ENCODE measurements at regions of chr6 and their contacts with region 1.

Region 1: DNA sequence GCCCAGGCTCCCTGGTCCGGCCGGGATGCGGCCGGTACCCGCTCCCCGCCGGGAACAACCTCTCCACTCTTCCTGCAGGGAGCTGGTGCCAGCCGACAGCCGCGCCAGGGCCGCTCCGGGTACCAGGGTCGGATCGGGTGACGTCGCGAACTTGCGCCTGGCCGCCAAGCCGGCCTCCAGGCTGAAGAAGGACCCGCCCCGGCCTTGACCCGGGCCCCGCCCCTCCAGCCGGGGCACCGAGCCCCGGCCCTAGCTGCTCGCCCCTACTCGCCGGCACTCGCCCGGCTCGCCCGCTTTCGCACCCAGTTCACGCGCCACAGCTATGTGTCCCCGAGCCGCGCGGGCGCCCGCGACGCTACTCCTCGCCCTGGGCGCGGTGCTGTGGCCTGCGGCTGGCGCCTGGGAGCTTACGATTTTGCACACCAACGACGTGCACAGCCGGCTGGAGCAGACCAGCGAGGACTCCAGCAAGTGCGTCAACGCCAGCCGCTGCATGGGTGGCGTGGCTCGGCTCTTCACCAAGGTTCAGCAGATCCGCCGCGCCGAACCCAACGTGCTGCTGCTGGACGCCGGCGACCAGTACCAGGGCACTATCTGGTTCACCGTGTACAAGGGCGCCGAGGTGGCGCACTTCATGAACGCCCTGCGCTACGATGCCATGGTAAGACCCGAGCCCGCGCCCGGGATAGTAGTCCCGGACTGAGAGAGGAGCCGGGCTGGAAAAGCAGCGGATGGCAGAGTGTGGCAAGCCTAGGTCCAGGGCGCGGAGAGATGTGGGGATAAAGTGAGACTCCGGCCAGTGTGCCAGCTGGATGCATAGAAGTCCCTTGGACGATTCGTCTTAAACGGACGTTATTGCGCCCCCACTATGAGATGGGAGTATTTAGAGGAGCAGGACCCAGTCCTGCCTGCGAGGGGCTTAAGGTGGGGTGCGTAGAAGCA is at the start of gene NT5E:
- DNase-seq: no peak
- H3K4me3 ChIP-seq: peak within 1 kb of the TSS; percentile 87
- H3K27me3 ChIP-seq: no peaks in the 10 kb centered on the region
- CTCF ChIP-seq: no peak
- polyA plus RNA-seq, gene NT5E: 63.0 and 99.2 TPM in 2 replicates

Region 2: DNA sequence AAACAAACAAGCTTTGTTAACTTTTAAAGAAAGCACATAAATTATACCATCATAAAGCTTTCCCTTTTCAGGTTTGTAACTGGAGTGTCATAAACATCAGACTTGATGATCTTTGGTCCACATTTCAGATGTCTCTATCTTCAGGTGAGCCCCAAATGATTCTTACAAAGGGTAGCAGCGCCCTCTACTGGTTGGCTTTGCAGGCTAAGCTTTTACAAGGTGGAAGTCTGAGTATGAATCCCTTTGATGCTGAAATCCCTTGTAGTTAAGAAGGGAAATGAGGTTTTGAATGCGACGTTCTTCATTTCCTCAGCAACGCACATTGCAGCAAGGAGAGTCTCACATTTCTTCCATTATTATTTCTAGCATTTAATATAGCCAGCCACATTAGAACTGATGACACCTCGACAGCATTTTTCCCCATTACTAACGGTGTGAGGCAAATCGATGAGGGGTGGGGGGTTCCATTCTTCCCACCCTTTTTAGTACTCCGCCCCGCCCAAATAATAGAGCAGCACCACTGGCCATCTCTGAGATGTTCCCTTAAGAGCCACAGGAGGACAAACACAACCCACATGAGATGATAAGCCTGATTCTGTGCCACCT is 126.6 kb before region 1 on chr6:
- CTCF ChIA-PET with region 1: no interaction called
- POLR2A ChIA-PET with region 1: no interaction called
- DNase-seq: no peak
- H3K4me3 ChIP-seq: no peak overlapping the region
- H3K27me3 ChIP-seq: peaks cover 2% of the 10 kb centered on the region; the same call in 1 of the 2 replicates
- CTCF ChIP-seq: peak; percentile 88

Region 3: GRCh38 chr6:85354761-85355618 is 95.1 kb before region 1 on chr6:
- CTCF ChIA-PET with region 1: interaction called, 12 read pairs
- POLR2A ChIA-PET with region 1: no interaction called
- DNase-seq: no peak
- H3K4me3 ChIP-seq: no peak overlapping the region
- H3K27me3 ChIP-seq: no peaks in the 10 kb centered on the region
- CTCF ChIP-seq: peak; percentile 89

Region 4: GRCh38 chr6:85360794-85361642 is 89.1 kb before region 1 on chr6:
- CTCF ChIA-PET with region 1: interaction called, 12 read pairs
- POLR2A ChIA-PET with region 1: interaction called, 3 read pairs
- DNase-seq: peak; percentile 93
- H3K4me3 ChIP-seq: no peak overlapping the region
- H3K27me3 ChIP-seq: no peaks in the 10 kb centered on the region
- CTCF ChIP-seq: no peak

Region 5: GRCh38 chr6:85404502-85405174 is 45.5 kb before region 1 on chr6:
- CTCF ChIA-PET with region 1: interaction called, 9 read pairs
- POLR2A ChIA-PET with region 1: interaction called, 11 read pairs
- DNase-seq: peak; percentile 74
- H3K4me3 ChIP-seq: no peak overlapping the region
- H3K27me3 ChIP-seq: no peaks in the 10 kb centered on the region
- CTCF ChIP-seq: no peak

Region 6: GRCh38 chr6:85436411-85436810 is 13.7 kb before region 1 on chr6:
- CTCF ChIA-PET with region 1: no interaction called
- POLR2A ChIA-PET with region 1: no interaction called
- DNase-seq: peak; percentile 76
- H3K4me3 ChIP-seq: no peak overlapping the region
- H3K27me3 ChIP-seq: no peaks in the 10 kb centered on the region
- CTCF ChIP-seq: no peak

Region 7: DNA sequence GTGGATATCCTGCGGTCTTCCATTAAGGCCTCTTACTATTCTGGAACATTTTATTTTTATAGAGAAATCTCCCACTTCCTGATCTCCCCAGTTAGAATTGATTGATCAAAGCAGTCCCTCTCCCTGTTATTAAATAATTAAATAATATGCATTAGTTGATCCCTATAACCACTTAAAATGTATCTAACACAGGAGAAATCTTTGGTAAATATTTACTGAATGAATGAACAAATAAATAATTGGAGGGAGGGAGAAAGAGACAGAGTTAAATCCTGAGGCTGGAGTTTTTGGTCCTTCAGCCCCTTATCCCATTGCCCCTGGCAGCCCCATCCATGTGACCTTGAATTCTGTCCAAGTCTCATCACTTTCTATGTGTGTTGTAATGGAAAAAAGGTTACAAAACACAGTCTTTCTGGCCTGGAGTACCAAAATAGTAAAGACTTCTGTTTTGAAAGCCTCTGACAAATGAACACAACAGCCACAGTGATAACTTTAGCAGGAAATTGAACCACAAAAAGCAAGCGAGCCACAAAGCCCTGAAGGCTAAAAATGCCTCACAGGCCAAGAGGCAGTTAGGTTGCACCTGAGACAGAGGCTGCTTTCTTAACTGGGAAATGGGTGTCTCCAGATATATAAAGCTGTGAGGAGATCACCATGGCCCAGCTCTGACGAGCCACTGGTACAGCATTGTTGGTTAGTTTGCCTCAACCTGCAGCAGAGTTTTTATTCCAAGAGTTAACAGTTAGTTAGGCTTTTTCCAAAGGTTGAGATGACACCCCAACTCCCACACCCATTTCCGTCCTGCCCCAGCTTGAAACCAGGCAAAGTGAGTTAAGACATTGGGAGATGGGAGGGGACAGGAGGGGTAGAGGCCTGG is 11.1 kb after region 1 on chr6:
- CTCF ChIA-PET with region 1: interaction called, 22 read pairs
- POLR2A ChIA-PET with region 1: interaction called, 4 read pairs
- DNase-seq: no peak
- H3K4me3 ChIP-seq: no peak overlapping the region
- H3K27me3 ChIP-seq: no peaks in the 10 kb centered on the region
- CTCF ChIP-seq: no peak

Region 8: GRCh38 chr6:85580882-85581267 is 130.8 kb after region 1 on chr6:
- CTCF ChIA-PET with region 1: no interaction called
- POLR2A ChIA-PET with region 1: no interaction called
- DNase-seq: no peak
- H3K4me3 ChIP-seq: no peak overlapping the region
- H3K27me3 ChIP-seq: no peaks in the 10 kb centered on the region
- CTCF ChIP-seq: no peak

Measured in BJ (cell line).